ENCODE measurements at regions of chr1 and their contacts with region 1.

Region 1: GRCh38 chr1:6438047-6438525 is 13.5 kb downstream of the ESPN start:
- DNase-seq: peak; percentile 68
- H3K27ac ChIP-seq: peak overlapping the region; percentile 58
- CTCF ChIP-seq: peak; percentile 93

Region 2: GRCh38 chr1:6245086-6245868 is 192.8 kb before region 1 on chr1:
- CTCF ChIA-PET with region 1: interaction called, 19 read pairs
- POLR2A ChIA-PET with region 1: no interaction called
- DNase-seq: peak; percentile 72
- H3K27ac ChIP-seq: no peak overlapping the region
- CTCF ChIP-seq: peak; percentile 80

Region 3: GRCh38 chr1:6378096-6378746 is 59.9 kb before region 1 on chr1:
- CTCF ChIA-PET with region 1: no interaction called
- POLR2A ChIA-PET with region 1: no interaction called
- DNase-seq: no peak
- H3K27ac ChIP-seq: peak overlapping the region; percentile 63
- CTCF ChIP-seq: no peak

Region 4: DNA sequence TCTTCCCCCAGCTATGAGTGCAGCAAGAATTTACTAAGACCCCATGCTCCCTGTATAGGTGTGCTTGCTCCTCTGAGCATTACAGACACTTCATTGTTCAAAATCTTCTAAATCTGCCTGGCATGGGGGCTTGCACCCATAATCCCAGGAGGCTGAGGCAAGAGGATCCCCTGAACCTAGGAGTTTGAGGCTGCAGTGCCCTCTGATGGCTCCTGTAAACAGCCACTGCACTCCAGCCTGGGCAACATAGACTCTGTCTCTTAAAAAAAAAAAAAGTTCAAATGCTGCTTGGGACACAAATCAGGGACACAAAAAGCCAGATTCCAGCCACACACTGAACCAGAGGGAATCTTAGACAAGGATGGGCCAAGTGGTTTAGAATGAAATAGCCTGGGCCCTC is 41.1 kb before region 1 on chr1:
- CTCF ChIA-PET with region 1: no interaction called
- POLR2A ChIA-PET with region 1: interaction called, 14 read pairs
- DNase-seq: no peak
- H3K27ac ChIP-seq: no peak overlapping the region
- CTCF ChIP-seq: peak; percentile 37

Region 5: GRCh38 chr1:6414443-6414844 is 23.6 kb before region 1 on chr1:
- CTCF ChIA-PET with region 1: interaction called, 85 read pairs
- POLR2A ChIA-PET with region 1: no interaction called
- DNase-seq: peak; percentile 89
- H3K27ac ChIP-seq: peak overlapping the region; percentile 97
- CTCF ChIP-seq: peak; percentile 79

Region 6: GRCh38 chr1:6423321-6423999 is 14.6 kb before region 1 on chr1:
- CTCF ChIA-PET with region 1: interaction called, 85 read pairs
- POLR2A ChIA-PET with region 1: no interaction called
- DNase-seq: peak; percentile 74
- H3K27ac ChIP-seq: peak overlapping the region; percentile 88
- CTCF ChIP-seq: peak; percentile 90

Region 7: DNA sequence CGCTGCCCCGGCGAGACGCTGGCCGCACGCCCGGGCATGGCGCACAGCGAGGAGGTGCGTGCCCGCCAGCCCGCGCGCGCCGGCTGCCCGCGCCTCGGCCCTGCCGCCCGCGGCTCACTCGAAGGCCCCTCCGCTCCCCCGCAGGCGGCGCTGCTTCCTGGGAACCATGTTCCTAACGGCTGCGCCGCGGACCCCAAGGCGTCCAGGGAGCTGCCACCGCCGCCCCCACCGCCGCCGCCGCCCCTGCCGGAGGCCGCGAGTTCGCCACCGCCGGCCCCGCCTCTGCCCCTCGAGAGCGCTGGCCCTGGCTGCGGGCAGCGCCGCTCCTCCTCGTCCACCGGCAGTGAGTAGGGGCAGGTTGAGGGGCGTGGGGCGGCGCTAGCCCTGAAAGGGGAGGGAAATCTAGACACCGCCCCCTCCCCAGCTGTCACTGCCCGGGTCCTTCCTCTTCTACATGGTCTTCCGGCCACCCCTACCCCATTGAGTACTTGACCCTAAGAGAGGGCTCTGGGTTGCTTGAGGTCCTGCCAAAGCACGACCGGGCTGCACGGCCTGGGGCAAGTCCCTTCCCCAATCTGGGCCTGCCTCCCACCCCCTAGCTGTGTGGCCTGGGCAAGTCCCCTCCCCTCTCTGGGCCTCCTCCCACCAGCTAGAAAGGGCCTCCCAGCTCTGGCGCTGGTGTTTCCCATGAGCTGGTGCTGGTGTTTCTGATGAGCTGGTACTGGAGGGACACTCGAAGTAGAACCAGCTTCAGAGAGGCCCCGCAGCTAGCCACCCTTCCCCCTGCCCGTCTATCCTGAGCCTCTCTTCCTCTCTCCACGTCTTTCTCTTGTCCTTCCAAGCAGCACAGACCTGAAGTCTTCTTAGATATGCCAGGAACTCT is 10.9 kb after region 1 on chr1:
- CTCF ChIA-PET with region 1: interaction called, 14 read pairs
- POLR2A ChIA-PET with region 1: no interaction called
- DNase-seq: no peak
- H3K27ac ChIP-seq: no peak overlapping the region
- CTCF ChIP-seq: no peak

Region 8: GRCh38 chr1:6634371-6635052 is 196.4 kb after region 1 on chr1:
- CTCF ChIA-PET with region 1: no interaction called
- POLR2A ChIA-PET with region 1: no interaction called
- DNase-seq: peak; percentile 30
- H3K27ac ChIP-seq: peak overlapping the region; percentile 53
- CTCF ChIP-seq: peak; percentile 54